Endothelial cell of umbilical vein (primary cell): ENCODE measurements at regions of chr7 and their contacts with region 1.

Region 1: GRCh38 chr7:1193593-1194424 is 33.8 kb upstream of the ZFAND2A start:
- DNase-seq: peak; percentile 58
- H3K4me3 ChIP-seq: no peak overlapping the region
- H3K27ac ChIP-seq: no peak overlapping the region
- H3K4me1 ChIP-seq: peaks cover 13% of the 10 kb centered on the region
- H3K27me3 ChIP-seq: no peaks in the 10 kb centered on the region
- CTCF ChIP-seq: peak; percentile 62 to 82
- POLR2A ChIP-seq: no peak

Region 2: DNA sequence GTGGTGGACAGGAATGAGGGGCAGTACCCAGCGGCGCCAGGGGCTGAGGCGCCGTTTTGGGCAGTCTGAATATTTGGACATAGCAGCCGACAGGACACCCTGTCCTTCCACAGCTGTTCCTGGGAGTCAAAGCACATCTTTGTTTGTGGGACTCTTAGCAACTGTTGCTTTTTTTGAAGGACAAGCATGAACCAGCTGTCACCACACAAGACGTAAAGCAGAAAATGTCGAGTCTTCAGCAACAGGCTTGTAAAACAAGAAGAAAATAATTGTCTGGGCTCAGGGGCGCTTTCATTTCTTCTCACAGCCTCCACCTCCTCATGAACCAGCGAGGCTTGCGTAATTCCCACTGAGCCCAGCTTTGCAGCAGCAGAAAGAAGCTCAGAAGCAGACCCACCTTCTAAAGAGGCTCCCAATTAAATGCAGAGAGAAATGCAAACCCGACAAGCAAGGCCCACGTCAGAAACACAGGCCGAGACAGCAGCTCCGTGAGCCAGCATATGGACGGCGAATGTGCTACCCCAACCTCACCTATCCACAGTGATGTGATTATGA is 536.2 kb before region 1 on chr7:
- CTCF ChIA-PET with region 1: no interaction called
- POLR2A ChIA-PET with region 1: no interaction called
- dilution Hi-C with region 1: no loop called
- intact Hi-C with region 1: no loop called
- DNase-seq: no peak
- H3K4me3 ChIP-seq: no peak overlapping the region
- H3K27ac ChIP-seq: no peak overlapping the region
- H3K4me1 ChIP-seq: no peaks in the 10 kb centered on the region
- H3K27me3 ChIP-seq: no peaks in the 10 kb centered on the region
- CTCF ChIP-seq: no peak
- POLR2A ChIP-seq: no peak

Region 3: DNA sequence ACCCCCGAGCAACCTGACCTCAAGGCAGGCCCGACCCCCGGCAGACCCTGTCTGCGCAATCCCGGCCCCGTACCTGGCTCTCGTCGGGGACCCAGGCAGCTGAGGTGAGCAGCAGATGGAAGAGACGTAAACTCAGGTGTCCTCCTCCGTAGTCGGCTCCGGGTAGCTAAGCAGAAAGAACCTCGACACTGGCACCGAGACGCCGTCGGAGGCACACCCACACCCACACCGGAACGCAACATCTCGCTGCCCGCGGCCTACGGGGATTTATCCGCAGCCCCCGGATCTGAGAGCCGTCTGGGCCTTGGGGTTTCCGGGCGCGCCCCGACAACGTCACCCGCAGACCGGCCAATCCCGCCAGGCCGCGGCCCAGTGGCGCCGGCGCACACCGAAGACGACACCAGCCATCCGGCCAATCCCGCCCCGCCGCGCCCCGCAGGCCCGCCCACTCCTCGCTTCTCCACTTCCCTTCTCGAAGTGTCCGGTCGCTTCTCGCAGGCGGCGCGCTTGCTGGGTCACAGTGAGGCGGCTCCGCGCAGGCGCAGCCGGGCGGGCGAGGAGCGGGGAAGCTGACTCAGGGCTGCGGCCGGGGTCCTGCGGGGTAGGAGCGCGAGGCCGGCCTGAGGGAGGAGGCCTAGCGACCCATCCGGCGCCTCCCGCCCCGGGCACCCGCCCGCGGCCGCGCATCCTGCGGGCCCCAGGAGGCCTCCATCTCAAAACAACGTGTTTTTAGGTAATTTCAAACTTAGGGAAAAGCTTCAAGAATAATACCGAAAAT is 33.7 kb before region 1 on chr7 and contains the start of gene ZFAND2A:
- CTCF ChIA-PET with region 1: no interaction called
- POLR2A ChIA-PET with region 1: no interaction called
- dilution Hi-C with region 1: no loop called
- intact Hi-C with region 1: no loop called
- DNase-seq: peak; percentile 99
- H3K4me3 ChIP-seq: peak within 1 kb of the TSS; percentile 71 to 97 (median 77)
- H3K27ac ChIP-seq: peak within 1 kb of the TSS; percentile 79
- H3K4me1 ChIP-seq: peaks cover 30% of the 10 kb centered on the region
- H3K27me3 ChIP-seq: no peaks in the 10 kb centered on the region
- CTCF ChIP-seq: no peak
- POLR2A ChIP-seq: peak; percentile 90
- total RNA-seq, gene ZFAND2A: 20.6 and 31.8 TPM in 2 replicates

Region 4: GRCh38 chr7:1175967-1176851 is 17.6 kb before region 1 on chr7:
- CTCF ChIA-PET with region 1: interaction called, 19 read pairs
- POLR2A ChIA-PET with region 1: no interaction called
- dilution Hi-C with region 1: no loop called
- intact Hi-C with region 1: no loop called
- DNase-seq: peak; percentile 80
- H3K4me3 ChIP-seq: peak overlapping the region in 2 of 3 experiments; percentile 17 to 22
- H3K27ac ChIP-seq: peak overlapping the region; percentile 20
- H3K4me1 ChIP-seq: peaks cover 14% of the 10 kb centered on the region
- H3K27me3 ChIP-seq: no peaks in the 10 kb centered on the region
- CTCF ChIP-seq: peak; percentile 97 to 98
- POLR2A ChIP-seq: no peak

Region 5: DNA sequence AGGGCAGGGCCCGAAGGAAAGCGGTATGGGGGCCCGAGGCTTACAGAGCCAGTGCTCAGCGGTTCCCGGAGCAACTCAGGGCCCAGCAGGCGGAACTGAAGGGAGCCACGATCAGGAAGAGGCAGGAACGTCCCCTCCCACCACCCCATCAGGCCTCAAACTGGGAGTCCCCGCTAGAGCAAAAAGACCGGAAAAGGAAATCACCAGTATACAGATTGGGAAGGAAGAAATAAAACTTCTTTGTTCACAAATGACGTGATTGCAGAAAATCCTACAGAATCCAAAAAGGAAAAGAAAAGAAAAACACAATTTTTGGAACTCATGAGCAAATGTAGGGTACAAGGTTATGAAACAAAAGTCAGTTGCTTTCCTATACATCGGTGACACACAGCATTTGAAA is 12.2 kb before region 1 on chr7:
- CTCF ChIA-PET with region 1: interaction called, 19 read pairs
- POLR2A ChIA-PET with region 1: no interaction called
- dilution Hi-C with region 1: no loop called
- intact Hi-C with region 1: no loop called
- DNase-seq: peak; percentile 44
- H3K4me3 ChIP-seq: no peak overlapping the region
- H3K27ac ChIP-seq: peak overlapping the region; percentile 46
- H3K4me1 ChIP-seq: peaks cover 15% of the 10 kb centered on the region
- H3K27me3 ChIP-seq: peaks cover 0 to 3% of the 10 kb centered on the region in 2 experiments
- CTCF ChIP-seq: no peak
- POLR2A ChIP-seq: no peak

Region 6: DNA sequence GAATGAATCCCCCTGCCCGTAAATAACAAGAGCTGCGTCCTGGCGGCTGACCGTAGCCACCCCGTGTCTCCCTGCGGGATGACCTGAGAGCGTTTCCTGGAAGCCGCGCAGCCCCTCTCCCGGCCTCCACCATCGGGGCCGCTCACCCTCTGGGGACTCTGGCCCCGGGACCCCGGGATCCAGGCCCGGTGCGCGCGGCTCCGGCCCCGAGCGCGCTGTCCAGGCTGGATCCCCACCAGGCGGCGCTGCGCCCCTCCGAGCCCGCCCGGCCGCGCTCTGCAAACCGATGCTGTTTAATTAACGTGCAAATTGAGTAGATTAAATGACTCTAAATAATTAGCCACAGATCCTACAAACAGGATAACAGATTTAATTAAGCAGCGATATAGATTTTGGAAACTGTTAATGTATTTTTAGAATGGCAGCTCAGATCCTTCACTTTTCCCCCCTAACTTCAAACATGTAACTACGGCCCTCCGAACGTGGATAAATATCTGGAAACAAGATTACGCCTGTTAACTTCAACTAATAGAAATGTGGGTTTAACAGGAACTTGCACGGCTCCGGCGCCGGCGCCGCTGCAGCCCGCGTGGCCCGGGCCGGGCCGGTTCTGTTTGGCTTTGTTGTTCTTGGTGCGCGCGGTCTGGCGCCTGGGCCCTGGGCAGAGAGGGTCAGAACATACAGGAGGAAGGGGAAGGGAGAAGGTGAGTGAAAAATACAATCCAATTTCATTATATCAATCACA is 31.8 kb after region 1 on chr7:
- CTCF ChIA-PET with region 1: interaction called, 15 read pairs
- POLR2A ChIA-PET with region 1: no interaction called
- dilution Hi-C with region 1: no loop called
- intact Hi-C with region 1: no loop called
- DNase-seq: no peak
- H3K4me3 ChIP-seq: no peak overlapping the region
- H3K27ac ChIP-seq: no peak overlapping the region
- H3K4me1 ChIP-seq: no peaks in the 10 kb centered on the region
- H3K27me3 ChIP-seq: peaks cover 59 to 80% of the 10 kb centered on the region in 2 experiments
- CTCF ChIP-seq: peak; percentile 74 to 77
- POLR2A ChIP-seq: no peak

Region 7: GRCh38 chr7:1412322-1413261 is 218.8 kb after region 1 on chr7:
- CTCF ChIA-PET with region 1: interaction called, 13 read pairs
- POLR2A ChIA-PET with region 1: no interaction called
- dilution Hi-C with region 1: no loop called
- intact Hi-C with region 1: loop called (anchors 1 kb)
- DNase-seq: peak; percentile 89
- H3K4me3 ChIP-seq: no peak overlapping the region
- H3K27ac ChIP-seq: no peak overlapping the region
- H3K4me1 ChIP-seq: no peaks in the 10 kb centered on the region
- H3K27me3 ChIP-seq: no peaks in the 10 kb centered on the region
- CTCF ChIP-seq: peak; percentile 85 to 86
- POLR2A ChIP-seq: no peak

Region 8: GRCh38 chr7:1432411-1433082 is 238.7 kb after region 1 on chr7:
- CTCF ChIA-PET with region 1: interaction called, 39 read pairs
- POLR2A ChIA-PET with region 1: no interaction called
- dilution Hi-C with region 1: no loop called
- intact Hi-C with region 1: loop called (anchors 2 kb)
- DNase-seq: peak; percentile 51
- H3K4me3 ChIP-seq: no peak overlapping the region
- H3K27ac ChIP-seq: no peak overlapping the region
- H3K4me1 ChIP-seq: no peaks in the 10 kb centered on the region
- H3K27me3 ChIP-seq: no peaks in the 10 kb centered on the region
- CTCF ChIP-seq: peak; percentile 95 to 97
- POLR2A ChIP-seq: no peak

Region 9: DNA sequence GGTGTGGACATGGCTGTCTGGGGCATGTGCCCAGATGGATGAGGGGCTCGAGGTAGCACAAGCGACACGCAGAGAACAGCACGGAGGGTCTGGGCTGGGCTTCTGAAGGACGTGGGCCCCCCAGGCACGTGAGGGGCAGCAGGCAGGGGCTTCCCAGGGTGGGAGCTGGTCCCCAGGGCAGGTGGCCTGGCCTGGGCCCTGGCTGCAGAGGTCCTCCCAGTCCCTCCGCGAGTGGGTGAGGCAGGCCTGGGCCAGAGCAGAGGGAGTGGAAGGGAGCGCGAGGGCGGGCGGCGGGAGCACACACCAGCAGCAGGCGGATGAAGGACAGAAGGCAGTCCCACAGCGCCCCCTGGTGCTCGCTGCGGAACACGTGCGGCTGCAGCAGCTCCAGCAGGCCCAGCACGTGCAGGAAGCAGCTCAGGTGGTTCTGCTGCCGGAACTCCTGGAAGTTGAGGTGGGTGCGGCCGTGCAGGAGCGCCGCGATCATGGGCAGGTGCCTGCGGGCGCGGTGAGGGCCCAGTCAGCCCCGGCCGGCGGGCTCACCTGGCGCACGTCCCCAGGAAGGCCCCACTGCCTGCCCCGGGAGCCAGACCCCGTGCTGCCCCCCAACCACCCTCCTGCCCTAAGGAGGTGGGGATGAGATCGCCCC is 280.2 kb after region 1 on chr7:
- CTCF ChIA-PET with region 1: interaction called, 23 read pairs
- POLR2A ChIA-PET with region 1: no interaction called
- dilution Hi-C with region 1: no loop called
- intact Hi-C with region 1: no loop called
- DNase-seq: peak; percentile 64
- H3K4me3 ChIP-seq: no peak overlapping the region
- H3K27ac ChIP-seq: no peak overlapping the region
- H3K4me1 ChIP-seq: no peaks in the 10 kb centered on the region
- H3K27me3 ChIP-seq: no peaks in the 10 kb centered on the region
- CTCF ChIP-seq: peak; percentile 91 to 97
- POLR2A ChIP-seq: no peak